Astrocyte of the cerebellum (primary cell): ENCODE measurements at regions of chr2 and their contacts with region 1.

Region 1: GRCh38 chr2:233061591-233062450 is 1.7 kb downstream of the INPP5D start:
- DNase-seq: no peak
- H3K4me3 ChIP-seq: no peak overlapping the region
- CTCF ChIP-seq: peak; percentile 31

Region 2: DNA sequence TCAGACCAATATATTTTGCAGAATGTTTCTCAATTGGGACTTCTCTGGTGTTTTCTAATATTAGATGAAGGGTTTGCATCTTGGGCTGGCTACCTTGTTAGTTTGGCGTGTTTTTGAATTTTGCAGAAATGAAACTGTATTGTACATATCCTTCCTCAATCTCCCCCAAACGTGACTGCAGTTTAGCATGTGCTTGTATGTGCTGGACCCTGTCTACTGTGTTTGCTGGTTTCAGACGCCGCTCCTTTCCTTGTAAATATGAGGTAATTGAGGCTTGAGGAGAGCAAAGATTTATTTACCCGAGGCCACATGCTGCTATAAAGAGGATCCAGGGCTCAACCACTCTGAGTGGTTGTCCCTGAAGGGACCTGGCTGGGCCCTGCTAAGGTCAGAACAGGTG is 106.0 kb before region 1 on chr2:
- in situ Hi-C with region 1: loop called (anchors 5 kb)
- DNase-seq: no peak
- H3K4me3 ChIP-seq: no peak overlapping the region
- CTCF ChIP-seq: no peak

Region 3: DNA sequence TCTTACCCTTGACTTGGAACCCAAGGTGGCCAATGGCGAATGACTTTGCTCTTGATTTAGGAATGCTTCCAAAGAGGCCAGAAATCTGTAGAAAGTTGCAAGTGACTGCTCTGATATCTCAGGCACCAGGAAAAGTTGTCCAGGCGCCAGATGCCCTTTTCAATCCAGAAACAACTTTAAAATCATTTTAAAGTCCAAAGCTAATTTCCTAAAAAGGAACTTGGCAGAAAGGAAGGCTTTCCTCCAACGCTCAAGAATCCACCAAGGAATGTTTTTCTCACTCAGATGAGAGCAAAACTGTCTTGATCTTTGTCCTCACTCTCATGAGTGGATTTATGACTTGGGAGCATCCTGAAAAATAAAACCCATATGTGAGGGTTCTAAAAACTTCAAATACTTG is 54.1 kb before region 1 on chr2:
- in situ Hi-C with region 1: loop called (anchors 10 kb)
- DNase-seq: no peak
- H3K4me3 ChIP-seq: no peak overlapping the region
- CTCF ChIP-seq: no peak

Region 4: DNA sequence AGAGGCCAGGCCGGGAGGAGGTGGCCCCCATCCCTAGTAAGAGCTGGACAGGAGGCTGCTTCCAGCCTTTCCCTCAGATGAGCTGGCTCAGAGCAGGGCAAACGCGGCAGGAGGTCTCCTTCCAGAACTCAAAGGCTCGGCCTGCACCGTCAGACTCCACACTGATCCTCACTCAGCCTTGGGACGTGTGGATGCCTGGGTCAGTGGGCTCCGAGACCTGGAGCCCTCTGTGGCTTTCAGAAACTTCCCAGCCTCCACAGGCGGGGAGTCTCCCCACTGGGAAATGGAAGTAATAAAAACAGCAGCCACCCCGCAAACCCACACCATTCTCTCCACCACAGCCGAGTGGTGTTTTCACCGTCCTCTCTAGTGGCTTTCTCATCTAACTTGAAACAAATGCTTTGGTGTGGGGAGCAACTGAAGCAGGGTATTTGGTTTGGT is 52.6 kb after region 1 on chr2:
- in situ Hi-C with region 1: no loop called
- DNase-seq: peak; percentile 5
- H3K4me3 ChIP-seq: no peak overlapping the region
- CTCF ChIP-seq: no peak